SK-N-SH (cell line): ENCODE measurements at regions of chr1 and their contacts with region 1.

Region 1: DNA sequence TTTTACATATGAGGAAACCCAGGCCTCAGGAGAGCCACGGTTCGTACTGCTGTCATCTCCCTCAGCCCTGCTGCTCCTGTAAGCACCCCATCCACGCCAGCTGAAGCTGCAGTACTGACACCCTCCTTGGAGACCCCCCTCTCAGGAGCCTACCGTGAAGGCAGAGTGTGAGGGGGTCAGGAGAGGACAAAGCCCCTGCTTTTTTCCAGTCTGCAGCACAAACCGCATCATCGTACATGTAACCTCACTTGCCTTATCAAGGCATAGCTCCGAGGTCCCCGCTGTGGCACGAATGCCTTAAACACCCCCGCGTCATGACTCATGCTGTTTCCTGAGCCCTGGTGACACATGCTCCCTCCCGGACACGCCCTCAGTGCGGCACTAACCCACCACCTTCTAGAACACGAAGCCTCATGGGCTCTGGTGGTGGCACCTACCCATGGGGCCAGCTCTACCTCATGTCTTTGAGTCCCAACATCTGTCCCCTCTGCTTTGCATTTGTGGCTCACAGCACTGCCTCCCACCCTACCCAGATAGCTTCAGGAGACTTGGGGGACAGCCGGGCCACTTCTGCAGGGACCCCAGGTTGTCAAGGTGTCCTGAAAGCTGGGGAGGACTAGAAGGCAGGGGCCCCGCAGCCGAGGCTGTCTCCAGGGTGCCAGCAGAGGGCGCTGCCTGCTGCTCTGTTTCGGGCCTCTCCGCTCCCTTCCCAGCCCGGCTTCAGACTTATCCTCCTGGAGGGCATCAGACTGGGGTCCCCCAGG is 4.9 kb downstream of the SH3BGRL3 start:
- DNase-seq: peak; percentile 84
- H3K4me3 ChIP-seq: no peak overlapping the region; a peak in 1 of 4 replicates
- H3K27ac ChIP-seq: peak overlapping the region in 1 of 2 experiments; percentile 50; a peak in 2 of 4 replicates
- H3K4me1 ChIP-seq: peaks cover 28 to 33% of the 10 kb centered on the region in 2 experiments; a peak in 3 of 4 replicates
- H3K27me3 ChIP-seq: no peaks in the 10 kb centered on the region
- CTCF ChIP-seq: peak; percentile 75
- EP300 ChIP-seq: no peak
- RAD21 ChIP-seq: peak; percentile 66

Region 2: DNA sequence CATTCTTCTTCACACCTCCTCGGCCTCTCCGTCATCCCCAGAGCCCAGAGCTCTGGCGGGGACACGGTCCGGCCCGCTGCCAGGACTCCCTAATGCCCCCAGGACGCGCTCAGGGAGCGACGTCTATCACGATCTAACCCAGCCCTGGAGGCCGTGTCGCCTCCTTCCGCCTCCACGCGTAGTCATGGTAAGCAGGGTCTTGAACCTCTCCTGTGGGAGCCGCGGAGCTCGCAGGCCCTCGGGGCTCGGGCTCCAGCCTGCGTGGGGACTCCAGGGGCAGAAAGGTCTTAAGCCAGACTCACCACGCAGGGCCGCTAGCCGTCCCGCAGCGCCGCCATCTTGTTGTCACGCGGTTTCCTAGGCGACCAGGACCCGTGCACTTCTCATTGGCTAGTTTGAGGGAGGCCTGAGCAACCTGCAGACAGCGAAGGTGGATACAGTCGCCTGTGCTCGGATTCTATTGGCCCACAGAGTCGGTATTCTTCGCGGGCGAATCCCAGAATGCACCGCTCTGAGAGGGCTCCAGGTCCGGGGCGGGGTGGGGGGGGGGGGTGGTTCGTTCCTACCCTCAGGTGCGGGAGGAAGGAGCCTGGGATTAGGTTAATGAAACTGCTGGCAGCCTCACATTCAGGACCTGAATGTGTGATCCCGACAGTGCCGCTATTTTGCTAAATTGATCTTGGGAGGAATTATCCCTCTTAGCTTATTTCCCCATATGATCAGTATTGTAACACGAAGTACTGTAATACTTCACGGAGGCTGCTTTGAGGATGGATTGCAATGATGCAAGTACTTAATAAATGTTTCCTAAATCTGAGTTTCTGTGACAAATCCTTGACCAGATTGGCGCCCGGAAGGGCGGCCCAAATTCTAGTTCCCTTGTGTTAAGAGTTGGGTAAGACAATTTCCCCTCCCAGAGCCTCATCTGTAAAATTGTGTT is 21.8 kb after region 1 on chr1 and contains the start of gene UBXN11:
- CTCF ChIA-PET with region 1: interaction called, 48 read pairs
- POLR2A ChIA-PET with region 1: no interaction called
- DNase-seq: peak; percentile 96
- H3K4me3 ChIP-seq: peak within 1 kb of the TSS; percentile 81 to 92
- H3K27ac ChIP-seq: peak within 1 kb of the TSS; percentile 27 to 58; a peak in 3 of 4 replicates
- H3K4me1 ChIP-seq: peaks cover 0 to 9% of the 10 kb centered on the region in 2 experiments; a peak in 1 of 4 replicates
- H3K27me3 ChIP-seq: no peaks in the 10 kb centered on the region; the same call in 1 of the 2 replicates
- CTCF ChIP-seq: no peak
- EP300 ChIP-seq: no peak
- RAD21 ChIP-seq: no peak
- polyA plus RNA-seq, gene UBXN11: 30.6 and 35.3 TPM in 2 replicates

Region 3: DNA sequence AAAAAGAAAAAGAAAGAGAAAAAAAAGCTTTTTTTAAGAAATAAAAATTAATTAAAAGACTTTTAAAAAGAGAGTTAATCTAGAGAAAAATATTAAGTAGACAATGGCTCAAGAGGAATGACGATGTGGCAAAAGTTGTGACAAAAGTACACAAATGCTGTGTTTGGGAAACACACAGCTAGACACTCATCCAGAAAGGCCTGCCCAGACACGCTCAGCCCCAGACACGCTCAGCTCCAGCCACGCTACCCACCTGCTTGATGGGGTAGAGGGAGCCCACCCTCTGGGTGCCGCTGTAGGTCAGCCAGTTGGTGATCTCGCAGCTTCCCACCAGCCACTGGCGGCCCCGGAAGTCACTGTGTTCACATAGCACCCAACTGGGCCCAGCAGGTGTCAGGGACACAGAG is 43.2 kb after region 1 on chr1:
- CTCF ChIA-PET with region 1: interaction called, 213 read pairs
- POLR2A ChIA-PET with region 1: interaction called, 3 read pairs
- DNase-seq: no peak
- H3K4me3 ChIP-seq: no peak overlapping the region
- H3K27ac ChIP-seq: no peak overlapping the region
- H3K4me1 ChIP-seq: no peaks in the 10 kb centered on the region
- H3K27me3 ChIP-seq: no peaks in the 10 kb centered on the region
- CTCF ChIP-seq: no peak
- EP300 ChIP-seq: no peak
- RAD21 ChIP-seq: no peak